Activated naive CD4-positive, alpha-beta T cell treated with anti-CD3 and anti-CD28 coated beads for 36 hours (primary cell): ENCODE measurements at regions of chr14 and their contacts with region 1.

Region 1: DNA sequence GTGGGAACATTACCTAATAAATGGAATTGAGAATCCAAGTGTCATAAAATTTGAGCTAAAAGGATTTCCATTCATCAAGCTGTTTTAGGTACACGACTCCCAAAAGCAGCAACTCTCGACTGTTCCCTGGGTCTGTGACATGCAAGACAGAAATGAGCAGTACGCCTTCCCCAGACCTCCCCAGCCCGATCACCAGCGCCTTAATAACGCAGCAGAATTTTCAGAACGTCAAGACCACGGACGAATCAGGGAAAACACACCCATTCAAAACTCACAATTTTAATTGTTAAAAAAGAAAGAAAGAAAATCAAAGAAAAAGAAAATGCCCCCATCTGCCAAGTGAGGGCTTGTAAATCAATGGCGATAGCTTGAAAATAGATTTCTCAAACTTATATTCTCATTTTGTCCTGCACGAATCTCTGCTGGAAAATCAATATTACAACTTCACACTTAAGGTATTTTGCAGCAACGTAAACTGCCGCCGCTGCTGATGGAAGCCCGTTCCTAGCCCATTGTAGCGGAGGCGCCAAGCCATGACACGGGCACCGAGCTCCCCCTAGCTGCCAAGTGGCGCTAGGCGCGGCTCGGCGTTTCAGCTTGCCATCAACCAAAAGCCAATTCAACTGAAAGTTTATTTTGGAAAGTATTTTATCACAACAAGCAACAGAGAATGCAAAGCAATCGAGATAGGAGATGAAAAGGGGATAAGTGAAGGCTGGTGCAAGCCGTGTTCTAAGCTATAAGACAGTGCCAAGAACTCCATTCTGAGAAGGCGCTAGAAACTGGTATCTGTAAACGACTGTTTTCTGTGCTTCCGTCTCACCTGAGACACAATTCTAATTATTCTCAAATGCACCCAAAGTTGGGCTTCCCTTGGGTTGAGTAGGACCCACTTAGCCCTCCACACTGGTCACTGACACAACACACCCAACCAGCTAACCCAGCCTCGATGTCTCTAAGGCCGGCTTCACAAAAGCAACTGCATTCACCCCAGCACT is 5.5 kb downstream of the BCL11B start:
- DNase-seq: peak; percentile 93
- H3K4me3 Mint-ChIP-seq: peak overlapping the region; percentile 96
- H3K27ac Mint-ChIP-seq: peak overlapping the region; percentile 95
- H3K4me1 Mint-ChIP-seq: peaks cover 44% of the 10 kb centered on the region
- H3K27me3 Mint-ChIP-seq: no peaks in the 10 kb centered on the region

Region 2: DNA sequence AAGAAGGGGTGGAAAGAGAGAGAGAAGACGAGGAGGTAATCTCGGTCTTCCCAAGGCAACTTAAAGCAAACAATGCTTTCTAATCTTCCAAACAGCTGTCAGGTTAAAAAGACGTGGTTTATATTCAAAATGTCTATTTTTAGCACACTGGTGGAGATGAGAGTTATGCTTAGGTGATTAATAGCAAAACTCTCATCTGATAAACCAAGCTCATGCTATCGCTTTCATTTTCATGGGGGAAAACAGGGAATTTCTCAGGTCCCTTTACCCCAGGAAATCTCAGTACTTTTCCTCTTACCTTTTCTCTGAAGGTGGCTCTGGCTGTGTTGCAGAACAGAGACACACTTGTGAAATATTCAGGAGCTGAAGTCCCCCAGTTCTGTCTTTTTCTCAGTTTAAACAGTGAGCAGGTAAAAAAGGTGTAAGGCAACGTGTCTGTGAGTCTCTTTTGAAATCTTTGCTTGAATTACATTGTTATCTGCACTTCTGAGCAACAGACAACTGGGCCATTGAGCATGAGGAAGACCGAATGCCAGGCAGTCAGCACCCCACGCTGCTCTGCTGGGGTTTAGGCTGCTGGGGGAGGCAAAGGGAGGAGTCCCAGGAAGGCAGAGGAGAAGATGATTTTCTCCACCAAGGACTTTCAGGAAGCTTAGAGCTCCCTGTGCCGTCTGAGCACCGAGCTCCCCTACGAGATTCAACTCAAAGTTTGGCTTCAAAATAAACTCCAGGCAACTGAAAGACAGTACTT is 753.8 kb before region 1 on chr14:
- CTCF ChIA-PET with region 1: interaction called, 3 read pairs
- intact Hi-C with region 1: loop called (anchors 10 kb)
- DNase-seq: no peak
- H3K4me3 Mint-ChIP-seq: peak overlapping the region; percentile 30
- H3K27ac Mint-ChIP-seq: peak overlapping the region; percentile 73
- H3K4me1 Mint-ChIP-seq: peaks cover 40% of the 10 kb centered on the region
- H3K27me3 Mint-ChIP-seq: no peaks in the 10 kb centered on the region

Region 3: DNA sequence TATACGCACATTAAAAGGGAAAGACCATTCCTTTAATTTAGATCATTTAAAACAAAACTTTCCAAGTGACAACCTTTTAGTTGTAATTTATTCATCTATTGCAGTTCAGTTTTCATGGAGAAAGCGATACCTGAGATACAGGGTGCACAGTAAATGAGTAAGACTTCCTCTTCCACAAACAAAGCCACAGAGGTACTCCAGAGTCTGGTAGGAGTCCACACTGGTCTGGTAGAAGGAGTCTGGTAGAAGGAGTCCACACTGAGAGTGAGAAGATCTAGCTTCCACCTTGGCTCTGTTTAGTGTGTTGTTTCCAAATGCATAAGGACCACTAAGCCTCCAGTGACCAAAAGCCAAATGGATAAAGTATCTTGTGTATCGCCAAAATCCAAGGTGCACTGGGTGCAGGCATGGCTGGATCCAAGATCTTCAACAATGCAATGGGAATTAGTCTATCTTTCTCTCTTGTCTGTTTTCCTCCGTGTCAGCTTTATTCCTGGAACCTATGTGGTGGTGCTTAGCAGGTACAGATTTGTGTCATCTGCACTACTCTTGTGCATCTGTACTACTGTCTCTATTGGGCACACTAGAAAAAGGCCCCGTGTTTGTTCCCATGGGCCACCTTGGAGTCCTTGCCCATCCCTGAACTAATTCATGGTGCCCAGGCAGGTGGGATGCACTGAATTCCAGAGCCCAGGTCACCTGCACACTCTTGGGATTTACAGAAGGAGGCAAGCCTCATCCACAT is 325.6 kb before region 1 on chr14:
- CTCF ChIA-PET with region 1: no interaction called
- intact Hi-C with region 1: loop called (anchors 5 kb)
- DNase-seq: no peak
- H3K4me3 Mint-ChIP-seq: no peak overlapping the region
- H3K27ac Mint-ChIP-seq: no peak overlapping the region
- H3K4me1 Mint-ChIP-seq: peaks cover 53% of the 10 kb centered on the region
- H3K27me3 Mint-ChIP-seq: no peaks in the 10 kb centered on the region

Region 4: GRCh38 chr14:99035712-99036610 is 230.5 kb before region 1 on chr14:
- CTCF ChIA-PET with region 1: no interaction called
- intact Hi-C with region 1: no loop called
- DNase-seq: no peak
- H3K4me3 Mint-ChIP-seq: no peak overlapping the region
- H3K27ac Mint-ChIP-seq: no peak overlapping the region
- H3K4me1 Mint-ChIP-seq: no peaks in the 10 kb centered on the region
- H3K27me3 Mint-ChIP-seq: no peaks in the 10 kb centered on the region

Region 5: GRCh38 chr14:99245564-99246511 is 20.6 kb before region 1 on chr14:
- CTCF ChIA-PET with region 1: interaction called, 44 read pairs
- intact Hi-C with region 1: no loop called
- DNase-seq: no peak
- H3K4me3 Mint-ChIP-seq: peak overlapping the region; percentile 77
- H3K27ac Mint-ChIP-seq: peak overlapping the region; percentile 93
- H3K4me1 Mint-ChIP-seq: peaks cover 76% of the 10 kb centered on the region
- H3K27me3 Mint-ChIP-seq: no peaks in the 10 kb centered on the region

Region 6: DNA sequence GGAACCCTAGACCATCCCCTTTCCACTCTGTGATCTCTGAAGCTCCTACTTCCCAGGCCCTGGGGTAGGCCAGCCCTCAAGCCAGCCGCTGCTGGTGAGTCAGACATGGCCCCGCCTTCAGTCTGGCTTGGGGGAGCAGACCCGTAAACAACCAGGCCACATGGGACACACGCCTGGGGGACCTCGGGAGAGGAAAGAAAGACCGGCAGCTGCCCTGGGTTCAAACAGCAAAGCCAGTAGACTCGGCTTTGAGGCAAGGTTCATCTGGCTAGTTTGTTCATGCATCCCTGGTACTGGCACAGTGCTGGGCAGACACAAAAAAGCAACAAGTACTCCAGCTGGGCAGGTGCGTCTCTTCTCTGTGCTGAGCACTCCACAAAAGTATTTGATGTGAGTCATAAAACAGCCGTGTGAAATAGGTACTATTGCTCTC is 112.3 kb after region 1 on chr14:
- CTCF ChIA-PET with region 1: no interaction called
- intact Hi-C with region 1: no loop called
- DNase-seq: no peak
- H3K4me3 Mint-ChIP-seq: no peak overlapping the region
- H3K27ac Mint-ChIP-seq: no peak overlapping the region
- H3K4me1 Mint-ChIP-seq: no peaks in the 10 kb centered on the region
- H3K27me3 Mint-ChIP-seq: peaks cover 8% of the 10 kb centered on the region